ENCODE measurements at regions of chr13 and their contacts with region 1.

Region 1: DNA sequence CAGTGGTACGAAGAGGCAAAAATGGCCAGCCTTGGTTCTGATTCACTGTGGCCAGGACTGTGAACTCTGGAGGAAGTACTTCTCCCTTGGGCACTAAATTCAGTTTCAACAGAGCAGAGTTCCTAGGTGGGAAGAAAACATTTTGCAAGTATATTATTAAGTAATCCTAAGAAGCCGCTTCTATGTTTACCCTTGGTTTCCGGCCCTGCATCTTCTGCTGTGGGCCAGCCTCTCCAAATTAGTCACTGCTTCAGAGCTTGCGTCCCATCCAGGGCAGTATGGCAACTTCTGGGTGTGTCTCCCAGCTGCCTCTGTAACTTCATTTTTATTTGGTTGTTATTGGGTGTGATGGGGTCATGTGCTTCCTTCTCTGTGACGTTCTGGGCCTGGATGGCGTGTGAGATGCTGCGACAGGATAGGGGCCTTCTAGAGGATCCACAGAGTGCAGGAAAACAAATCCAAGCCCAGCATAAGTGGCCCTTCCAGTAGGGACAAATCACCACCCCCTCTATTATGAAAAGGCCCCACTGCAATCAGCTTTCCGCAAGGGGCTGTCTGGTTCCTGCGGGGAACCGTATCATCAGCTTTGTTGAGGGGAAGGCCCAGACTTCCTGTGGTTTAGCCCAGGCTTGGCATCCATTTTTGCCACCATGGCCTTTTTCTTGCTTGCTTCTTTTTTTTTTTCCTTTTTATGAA is 55.1 kb upstream of the C1QTNF9 start:
- DNase-seq: peak; percentile 56 to 87 (median 73)
- H3K4me3 ChIP-seq: peak overlapping the region; percentile 89
- H3K4me3 Mint-ChIP-seq: peak overlapping the region; percentile 91 to 99 (median 99)
- H3K27ac ChIP-seq: peak overlapping the region; percentile 85
- H3K27ac Mint-ChIP-seq: peak overlapping the region; percentile 95 to 100 (median 98)
- H3K4me1 ChIP-seq: peaks cover 71% of the 10 kb centered on the region
- H3K4me1 Mint-ChIP-seq: peaks cover 84 to 95% (median 92%) of the 10 kb centered on the region in 3 donors
- H3K27me3 ChIP-seq: no peaks in the 10 kb centered on the region
- H3K27me3 Mint-ChIP-seq: no peaks in the 10 kb centered on the region

Region 2: GRCh38 chr13:24264976-24265375 is 10.7 kb after region 1 on chr13:
- CTCF ChIA-PET with region 1: interaction called, 91 read pairs
- POLR2A ChIA-PET with region 1: interaction called, 221 read pairs
- DNase-seq: peak; percentile 69 to 91 (median 83)
- H3K4me3 ChIP-seq: peak overlapping the region; percentile 42
- H3K4me3 Mint-ChIP-seq: peak overlapping the region; percentile 77 to 89 (median 84)
- H3K27ac ChIP-seq: no peak overlapping the region
- H3K27ac Mint-ChIP-seq: peak overlapping the region; percentile 92 to 100 (median 98)
- H3K4me1 ChIP-seq: peaks cover 99% of the 10 kb centered on the region
- H3K4me1 Mint-ChIP-seq: peaks cover 93 to 96% (median 95%) of the 10 kb centered on the region in 3 donors
- H3K27me3 ChIP-seq: no peaks in the 10 kb centered on the region
- H3K27me3 Mint-ChIP-seq: no peaks in the 10 kb centered on the region

Region 3: GRCh38 chr13:24270639-24271141 is 16.4 kb after region 1 on chr13:
- CTCF ChIA-PET with region 1: interaction called, 91 read pairs
- POLR2A ChIA-PET with region 1: interaction called, 221 read pairs
- DNase-seq: peak; percentile 47 to 79 (median 76)
- H3K4me3 ChIP-seq: peak overlapping the region; percentile 48
- H3K4me3 Mint-ChIP-seq: peak overlapping the region; percentile 83 to 93 (median 89)
- H3K27ac ChIP-seq: peak overlapping the region; percentile 81
- H3K27ac Mint-ChIP-seq: peak overlapping the region; percentile 91 to 99 (median 98)
- H3K4me1 ChIP-seq: peaks cover 92% of the 10 kb centered on the region
- H3K4me1 Mint-ChIP-seq: peaks cover 91 to 96% (median 93%) of the 10 kb centered on the region in 3 donors
- H3K27me3 ChIP-seq: no peaks in the 10 kb centered on the region
- H3K27me3 Mint-ChIP-seq: peaks cover 0 to 6% of the 10 kb centered on the region in 2 donors

Measured in CD8-positive, alpha-beta memory T cell (primary cell).